Vagina (tissue), 2 donors: ENCODE measurements at regions of chr17 and their contacts with region 1.

Region 1: GRCh38 chr17:13086142-13086769 is 68.4 kb upstream of the ELAC2 start:
- DNase-seq: no peak
- H3K4me3 ChIP-seq: no peak overlapping the region
- H3K27ac ChIP-seq: no peak overlapping the region
- H3K4me1 ChIP-seq: peaks cover 4% of the 10 kb centered on the region
- H3K27me3 ChIP-seq: no peaks in the 10 kb centered on the region
- CTCF ChIP-seq: no peak
- POLR2A ChIP-seq: no peak

Region 2: GRCh38 chr17:13070732-13071131 is 15.5 kb before region 1 on chr17:
- intact Hi-C with region 1: loop called (anchors 1 kb)
- DNase-seq: no peak
- H3K4me3 ChIP-seq: no peak overlapping the region
- H3K27ac ChIP-seq: no peak overlapping the region
- H3K4me1 ChIP-seq: peaks cover under 1% of the 10 kb centered on the region
- H3K27me3 ChIP-seq: no peaks in the 10 kb centered on the region
- CTCF ChIP-seq: no peak
- POLR2A ChIP-seq: no peak